ENCODE measurements at regions of chr15 and their contacts with region 1.

Region 1: GRCh38 chr15:73081321-73081958 is 29.2 kb downstream of the NEO1 start:
- DNase-seq: no peak
- ATAC-seq: peak; percentile 65 to 79
- H3K4me3 ChIP-seq: no peak overlapping the region
- H3K27ac ChIP-seq: no peak overlapping the region
- H3K4me1 ChIP-seq: peaks cover 29 to 35% of the 10 kb centered on the region in 2 donors
- H3K27me3 ChIP-seq: no peaks in the 10 kb centered on the region
- CTCF ChIP-seq: peak; percentile 63 to 84 (median 73)
- POLR2A ChIP-seq: no peak

Region 2: GRCh38 chr15:72722071-72722696 is 359.3 kb before region 1 on chr15:
- in situ Hi-C with region 1: no loop called
- intact Hi-C with region 1: loop called (anchors 5 kb)
- DNase-seq: peak; percentile 2 to 66
- ATAC-seq: peak in 1 of 2 donors; percentile 76
- H3K4me3 ChIP-seq: no peak overlapping the region
- H3K27ac ChIP-seq: no peak overlapping the region
- H3K4me1 ChIP-seq: peaks cover 4 to 9% of the 10 kb centered on the region in 2 donors
- H3K27me3 ChIP-seq: no peaks in the 10 kb centered on the region
- CTCF ChIP-seq: peak; percentile 56 to 74 (median 58)
- POLR2A ChIP-seq: no peak

Region 3: DNA sequence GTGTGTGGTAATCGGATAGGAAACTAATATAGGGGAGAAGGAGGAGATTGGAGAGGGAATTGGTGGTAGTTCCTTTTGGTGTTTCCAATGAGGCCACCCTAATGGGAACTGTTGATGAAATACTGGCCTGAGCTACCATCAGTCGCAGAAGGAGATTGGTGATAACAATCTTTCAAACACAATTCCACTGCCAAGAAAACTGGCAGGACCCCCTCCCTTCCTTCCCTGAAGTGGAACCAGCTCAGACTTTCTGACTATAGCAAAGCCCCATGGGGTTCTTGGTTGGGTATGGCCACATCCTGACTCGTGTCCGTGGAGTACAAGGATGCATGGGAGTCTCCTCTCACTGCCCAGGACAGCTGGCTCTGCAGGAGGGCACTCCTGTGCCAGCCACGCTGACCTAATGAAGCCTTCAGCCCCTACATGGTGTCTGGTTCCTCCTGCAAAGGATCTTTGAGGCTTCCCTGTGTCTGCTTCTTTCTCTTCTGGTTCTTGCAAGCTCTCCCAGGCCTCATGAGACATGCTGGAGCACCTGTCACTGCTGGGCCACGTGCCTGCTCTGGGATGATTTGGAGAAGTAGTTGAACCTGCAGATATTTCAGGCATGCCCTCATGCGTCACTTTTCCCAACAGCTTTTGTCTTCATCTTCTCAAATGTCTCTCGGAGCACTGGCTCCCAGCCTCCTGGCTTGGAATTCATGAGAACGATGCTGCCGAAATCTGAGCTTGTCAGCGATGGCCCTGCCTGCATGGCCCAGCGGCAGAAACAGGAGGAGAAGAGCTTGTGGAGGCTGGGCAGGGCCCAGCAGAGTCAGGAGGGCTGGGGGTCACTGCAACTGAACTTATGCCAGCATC is 207.8 kb before region 1 on chr15:
- in situ Hi-C with region 1: no loop called
- intact Hi-C with region 1: loop called (anchors 5 kb)
- DNase-seq: peak; percentile 94 to 99
- ATAC-seq: peak; percentile 82 to 84
- H3K4me3 ChIP-seq: peak overlapping the region in 1 of 4 donors; percentile 1
- H3K27ac ChIP-seq: peak overlapping the region; percentile 87 to 93 (median 90)
- H3K4me1 ChIP-seq: peaks cover 56 to 62% of the 10 kb centered on the region in 2 donors
- H3K27me3 ChIP-seq: no peaks in the 10 kb centered on the region
- CTCF ChIP-seq: no peak
- POLR2A ChIP-seq: peak; percentile 32 to 42

Region 4: DNA sequence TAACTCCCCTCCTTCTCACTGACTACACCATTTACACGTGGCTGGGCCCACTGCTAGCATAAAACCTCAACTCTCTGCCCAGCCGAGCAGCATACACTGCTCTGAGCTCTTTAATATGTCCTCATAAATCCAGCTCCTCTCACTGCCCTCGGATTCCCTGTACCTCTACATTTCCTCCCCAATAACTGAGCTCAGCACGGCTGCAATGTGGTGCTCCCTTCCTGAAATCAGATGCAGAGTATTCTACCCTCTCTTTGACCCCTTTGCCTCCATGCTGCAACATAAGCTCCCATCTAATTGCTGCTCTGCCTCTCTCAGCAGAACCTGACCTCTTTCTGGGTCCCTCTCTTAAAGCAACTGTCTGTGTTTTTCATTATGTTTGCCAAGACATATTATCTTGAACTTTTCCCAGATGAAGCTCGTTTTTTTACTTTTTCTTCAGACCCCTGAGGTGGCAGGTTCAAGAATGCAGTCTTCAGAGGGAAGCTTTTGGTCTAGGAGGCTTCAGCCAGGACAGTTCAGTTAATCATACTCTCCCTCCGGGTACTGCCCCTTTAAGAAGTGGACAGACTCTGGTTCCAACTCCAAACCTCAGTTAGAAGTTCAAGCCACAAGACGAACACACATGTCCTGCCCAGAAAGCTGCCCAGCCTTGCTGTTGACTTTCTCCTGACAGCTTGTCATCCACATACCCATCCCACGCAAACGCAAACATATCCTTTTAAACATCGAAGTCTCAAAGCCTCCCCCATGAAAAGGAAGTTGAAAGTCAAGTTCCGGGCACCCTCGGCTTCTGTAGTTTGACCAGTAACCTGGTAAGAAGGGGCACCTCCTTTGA is 110.3 kb before region 1 on chr15:
- in situ Hi-C with region 1: no loop called
- intact Hi-C with region 1: loop called (anchors 10 kb)
- DNase-seq: no peak
- ATAC-seq: peak; percentile 79 to 87
- H3K4me3 ChIP-seq: peak overlapping the region; percentile 36 to 54 (median 46)
- H3K27ac ChIP-seq: peak overlapping the region; percentile 71 to 80 (median 74)
- H3K4me1 ChIP-seq: peaks cover 32 to 42% of the 10 kb centered on the region in 2 donors
- H3K27me3 ChIP-seq: no peaks in the 10 kb centered on the region
- CTCF ChIP-seq: no peak
- POLR2A ChIP-seq: no peak